Common myeloid progenitor, CD34-positive (primary cell): ENCODE measurements at regions of chr9 and their contacts with region 1.

Region 1: GRCh38 chr9:130701056-130702022 is 7.8 kb downstream of the EXOSC2 start:
- DNase-seq: peak; percentile 63 to 78 (median 73)
- H3K4me3 ChIP-seq: no peak overlapping the region
- H3K27ac ChIP-seq: no peak overlapping the region
- H3K4me1 ChIP-seq: peaks cover 0 to 4% (median 0%) of the 10 kb centered on the region in 4 experiments
- H3K27me3 ChIP-seq: no peaks in the 10 kb centered on the region

Region 2: DNA sequence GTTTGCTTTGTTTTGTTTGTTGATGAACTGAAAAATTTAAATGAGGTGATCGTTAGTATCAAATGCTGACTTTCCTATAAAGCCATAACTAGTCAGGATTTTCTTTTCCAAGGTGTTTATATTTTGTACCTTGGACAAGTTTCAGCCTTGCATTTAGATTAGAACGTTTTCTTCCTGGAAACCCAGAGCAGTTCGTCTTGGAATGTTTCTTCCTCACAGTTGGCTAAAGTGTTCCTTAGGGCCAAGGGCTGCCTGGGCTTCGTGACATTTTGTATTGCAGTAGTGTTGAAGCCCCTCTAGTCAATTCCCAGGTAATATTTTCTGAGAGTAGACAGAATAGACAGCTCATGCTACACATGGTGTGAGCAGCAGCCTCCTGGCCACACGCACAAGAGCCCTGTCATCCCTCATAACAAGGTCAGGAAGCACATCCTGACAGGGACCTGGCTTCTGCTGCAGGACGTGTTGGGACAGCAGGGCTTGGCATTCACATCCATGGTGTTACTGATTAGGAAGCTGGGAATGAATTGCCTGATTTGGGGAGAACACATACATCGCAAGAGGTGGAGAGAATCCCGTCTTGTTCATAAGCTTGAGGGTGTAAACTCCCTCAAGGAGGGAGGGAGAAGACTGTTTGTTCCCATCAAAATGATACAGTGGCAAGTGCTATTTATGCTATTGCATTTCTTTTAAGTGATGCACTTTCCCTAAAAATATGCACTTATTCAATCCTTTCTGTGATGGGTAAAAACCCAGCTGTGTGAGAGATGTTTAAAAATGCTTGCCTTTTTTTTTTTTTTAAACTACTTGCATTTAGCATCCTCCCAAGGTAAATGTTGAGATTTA is 90.3 kb before region 1 on chr9:
- CTCF ChIA-PET with region 1: no interaction called
- POLR2A ChIA-PET with region 1: no interaction called
- DNase-seq: no peak
- H3K4me3 ChIP-seq: no peak overlapping the region
- H3K27ac ChIP-seq: no peak overlapping the region
- H3K4me1 ChIP-seq: no peaks in the 10 kb centered on the region
- H3K27me3 ChIP-seq: no peaks in the 10 kb centered on the region

Region 3: DNA sequence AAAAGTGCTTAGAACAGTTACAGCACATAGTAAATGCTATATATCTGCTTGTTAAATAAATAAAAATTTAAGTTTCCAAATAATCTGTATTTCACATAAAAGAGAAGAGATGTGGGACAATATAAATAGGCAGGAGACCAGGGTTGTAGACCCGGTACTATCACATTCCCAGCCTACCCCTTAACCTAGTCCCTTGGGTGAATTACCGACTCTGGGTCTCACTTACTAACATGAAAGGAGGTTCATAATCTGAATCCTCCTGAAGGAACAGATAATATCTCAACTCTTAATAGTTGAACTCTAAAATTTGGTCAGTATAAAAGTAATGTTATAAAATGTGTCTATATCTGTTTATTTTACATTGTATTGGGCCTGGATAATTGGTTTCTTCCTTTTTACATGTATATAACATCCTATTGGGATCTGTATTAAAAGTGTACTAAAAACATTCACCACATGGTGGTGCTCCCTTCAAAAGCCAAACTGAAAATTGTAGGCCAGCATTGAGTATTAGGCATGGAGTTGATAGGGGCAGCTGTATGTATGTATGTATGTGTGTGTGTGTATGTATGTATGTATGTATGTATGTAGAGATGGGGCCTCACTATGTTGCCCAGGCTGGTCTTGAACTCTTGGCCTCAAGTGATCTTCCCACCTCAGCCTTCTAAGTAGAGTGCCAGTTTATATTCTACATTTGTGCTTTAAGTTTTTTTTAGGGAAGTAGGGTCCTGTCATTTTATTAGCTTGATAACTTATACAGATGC is 69.5 kb after region 1 on chr9:
- CTCF ChIA-PET with region 1: interaction called, 15 read pairs
- POLR2A ChIA-PET with region 1: no interaction called
- DNase-seq: peak; percentile 81 to 85 (median 81)
- H3K4me3 ChIP-seq: no peak overlapping the region
- H3K27ac ChIP-seq: no peak overlapping the region
- H3K4me1 ChIP-seq: peaks cover 3 to 32% (median 20%) of the 10 kb centered on the region in 4 experiments
- H3K27me3 ChIP-seq: no peaks in the 10 kb centered on the region

Region 4: DNA sequence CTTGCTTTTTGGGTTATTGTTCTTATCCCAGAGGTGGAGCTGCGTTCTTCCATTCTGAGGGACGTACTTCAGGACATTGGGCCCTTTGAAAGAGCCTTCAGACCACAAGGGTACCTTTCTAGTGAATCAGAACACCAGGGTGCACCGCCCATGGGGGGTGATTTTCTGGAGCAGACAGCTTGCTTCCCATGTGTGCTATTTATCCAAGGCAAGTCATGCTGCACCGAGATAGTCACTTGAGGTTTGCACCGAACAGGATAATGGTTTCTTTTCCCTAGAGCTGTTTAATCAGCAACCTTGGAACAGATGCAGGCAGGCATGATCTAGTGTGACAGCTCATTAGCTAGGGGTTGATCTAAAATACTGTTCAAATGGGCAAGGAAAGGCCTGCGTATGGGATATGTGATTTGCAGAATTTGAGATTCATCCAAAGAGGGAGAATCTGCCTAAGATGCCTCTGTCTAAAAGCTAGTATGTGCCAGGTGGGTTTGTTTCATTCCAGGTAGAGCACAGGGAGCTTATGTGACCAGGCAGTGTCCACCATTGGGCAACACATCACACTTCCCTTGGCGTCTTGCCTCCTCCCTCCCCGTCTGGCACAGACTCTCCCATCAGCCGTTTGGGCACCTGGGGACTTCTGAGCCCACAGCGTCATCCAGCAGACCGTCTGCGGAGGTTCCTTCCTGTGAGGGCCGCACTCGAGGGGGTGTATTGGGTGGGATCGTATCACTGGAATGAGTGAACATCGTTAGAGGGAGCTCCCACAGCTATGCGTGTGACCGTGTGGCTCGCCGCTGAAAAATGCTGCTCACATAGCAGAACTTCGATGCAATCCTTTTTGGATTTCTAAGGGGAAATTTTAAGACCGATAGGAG is 156.8 kb after region 1 on chr9:
- CTCF ChIA-PET with region 1: interaction called, 249 read pairs
- POLR2A ChIA-PET with region 1: no interaction called
- DNase-seq: no peak
- H3K4me3 ChIP-seq: no peak overlapping the region
- H3K27ac ChIP-seq: no peak overlapping the region
- H3K4me1 ChIP-seq: no peaks in the 10 kb centered on the region
- H3K27me3 ChIP-seq: no peaks in the 10 kb centered on the region

Region 5: GRCh38 chr9:130997925-130998596 is 296.7 kb after region 1 on chr9:
- CTCF ChIA-PET with region 1: interaction called, 11 read pairs
- POLR2A ChIA-PET with region 1: no interaction called
- DNase-seq: peak; percentile 49 to 69 (median 58)
- H3K4me3 ChIP-seq: no peak overlapping the region
- H3K27ac ChIP-seq: no peak overlapping the region
- H3K4me1 ChIP-seq: peaks cover 0 to 27% (median 15%) of the 10 kb centered on the region in 4 experiments
- H3K27me3 ChIP-seq: peaks cover 0 to 16% (median 0%) of the 10 kb centered on the region in 5 experiments